Activated CD4-positive, alpha-beta T cell treated with anti-CD3 and anti-CD28 coated beads for 36 hours (primary cell): ENCODE measurements at regions of chr20 and their contacts with region 1.

Region 1: GRCh38 chr20:63739130-63740069 is at the start of gene SLC2A4RG:
- DNase-seq: peak; percentile 79
- ATAC-seq: peak; percentile 58
- H3K4me3 Mint-ChIP-seq: peak within 1 kb of the TSS; percentile 33
- H3K27ac Mint-ChIP-seq: no peak within 1 kb of the TSS
- H3K4me1 Mint-ChIP-seq: peaks cover 19% of the 10 kb centered on the region
- H3K27me3 Mint-ChIP-seq: no peaks in the 10 kb centered on the region
- total RNA-seq, gene SLC2A4RG: 30.9 to 34.9 TPM

Region 2: DNA sequence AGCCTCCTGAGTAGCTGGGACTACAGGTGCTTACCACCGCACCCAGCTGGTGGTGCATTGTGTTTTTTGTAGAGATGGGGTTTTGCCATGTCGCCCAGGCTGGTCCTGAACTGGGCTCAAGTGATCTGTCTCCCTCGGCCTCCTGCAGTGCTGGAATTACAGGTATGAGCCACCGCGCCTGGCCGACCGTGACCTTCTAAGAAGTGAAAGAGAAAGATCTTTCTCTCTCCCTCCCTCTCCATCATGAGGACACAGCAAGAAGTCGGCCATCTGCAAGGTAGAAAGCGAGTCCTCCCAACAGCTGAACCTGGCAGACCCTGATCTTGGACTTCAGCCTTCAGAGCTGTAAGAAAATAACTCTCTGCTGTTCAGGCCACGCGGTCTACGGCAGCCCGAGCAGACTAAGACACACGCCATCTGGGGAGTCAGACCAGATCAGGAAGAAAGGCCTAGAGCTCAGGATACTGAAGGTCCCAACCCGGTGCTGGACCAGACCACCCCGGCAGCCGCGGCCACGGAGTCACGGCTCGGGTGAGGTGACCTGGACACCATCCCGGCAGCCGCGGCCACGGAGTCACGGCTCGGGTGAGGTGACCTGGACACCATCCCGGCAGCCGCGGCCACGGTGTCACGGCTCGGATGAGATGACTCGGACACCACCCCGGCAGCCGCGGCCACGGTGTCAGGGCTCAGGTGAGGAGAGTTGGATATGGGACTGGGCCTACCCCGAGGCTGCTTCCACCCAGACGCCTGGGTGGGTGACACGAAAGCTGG is 122.1 kb before region 1 on chr20:
- CTCF ChIA-PET with region 1: no interaction called
- POLR2A ChIA-PET with region 1: no interaction called
- intact Hi-C with region 1: no loop called
- DNase-seq: no peak
- ATAC-seq: no peak
- H3K4me3 Mint-ChIP-seq: no peak overlapping the region
- H3K27ac Mint-ChIP-seq: no peak overlapping the region
- H3K4me1 Mint-ChIP-seq: peaks cover 5% of the 10 kb centered on the region
- H3K27me3 Mint-ChIP-seq: no peaks in the 10 kb centered on the region

Region 3: GRCh38 chr20:63641792-63642544 is 97.4 kb before region 1 on chr20:
- CTCF ChIA-PET with region 1: no interaction called
- POLR2A ChIA-PET with region 1: interaction called, 6 read pairs
- intact Hi-C with region 1: loop called in 1 of 2 experiments (anchors 5 kb)
- DNase-seq: peak; percentile 98
- ATAC-seq: peak; percentile 73
- H3K4me3 Mint-ChIP-seq: peak overlapping the region; percentile 65
- H3K27ac Mint-ChIP-seq: no peak overlapping the region
- H3K4me1 Mint-ChIP-seq: peaks cover 31% of the 10 kb centered on the region
- H3K27me3 Mint-ChIP-seq: no peaks in the 10 kb centered on the region

Region 4: DNA sequence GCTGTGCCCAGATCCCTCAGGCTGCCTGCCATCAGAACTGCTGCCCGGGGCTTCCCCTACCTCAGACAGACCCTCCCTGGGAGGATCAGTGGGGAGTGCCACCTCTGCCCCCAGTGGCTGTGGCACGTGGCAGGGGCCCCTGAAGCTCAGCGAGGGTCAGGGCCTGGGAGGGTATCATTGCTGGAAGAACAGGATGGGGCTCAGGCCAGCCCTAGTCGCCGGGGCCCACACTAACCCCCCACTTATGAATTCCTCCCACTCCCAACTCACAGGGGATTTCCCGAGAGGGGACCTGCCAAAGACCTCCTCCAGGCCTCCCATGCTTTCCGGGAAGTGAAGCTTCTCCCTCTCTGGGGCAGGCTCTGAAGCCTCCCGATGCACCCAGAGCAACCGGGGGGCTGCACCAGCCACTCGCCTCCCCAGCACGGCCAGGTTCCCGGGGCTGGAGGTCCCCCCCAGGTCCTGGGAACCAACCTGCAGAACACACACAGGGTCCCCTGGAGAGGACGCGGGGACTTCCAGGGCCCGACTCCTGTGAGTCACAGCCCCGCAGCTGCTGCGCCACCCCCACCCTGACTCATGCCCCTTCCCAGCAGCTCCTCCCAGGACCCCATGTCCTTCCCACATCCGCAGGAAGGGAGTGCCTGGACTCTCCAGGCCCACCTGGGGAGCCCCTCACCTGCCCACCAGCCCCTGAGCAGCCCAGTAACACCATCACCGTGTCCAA is 40.5 kb before region 1 on chr20:
- CTCF ChIA-PET with region 1: interaction called, 5 read pairs
- POLR2A ChIA-PET with region 1: no interaction called
- intact Hi-C with region 1: loop called in 1 of 2 experiments (anchors 5 kb)
- DNase-seq: peak; percentile 85
- ATAC-seq: peak; percentile 78
- H3K4me3 Mint-ChIP-seq: no peak overlapping the region
- H3K27ac Mint-ChIP-seq: peak overlapping the region; percentile 82
- H3K4me1 Mint-ChIP-seq: peaks cover 26% of the 10 kb centered on the region
- H3K27me3 Mint-ChIP-seq: no peaks in the 10 kb centered on the region

Region 5: GRCh38 chr20:63819224-63819921 is 80.0 kb after region 1 on chr20:
- CTCF ChIA-PET with region 1: no interaction called
- POLR2A ChIA-PET with region 1: no interaction called
- intact Hi-C with region 1: no loop called
- DNase-seq: no peak
- ATAC-seq: no peak
- H3K4me3 Mint-ChIP-seq: peak overlapping the region; percentile 15
- H3K27ac Mint-ChIP-seq: no peak overlapping the region
- H3K4me1 Mint-ChIP-seq: no peaks in the 10 kb centered on the region
- H3K27me3 Mint-ChIP-seq: peaks cover 9% of the 10 kb centered on the region

Region 6: GRCh38 chr20:63934271-63935068 is 195.1 kb after region 1 on chr20:
- CTCF ChIA-PET with region 1: no interaction called
- POLR2A ChIA-PET with region 1: no interaction called
- intact Hi-C with region 1: loop called in 1 of 2 experiments (anchors 5 kb)
- DNase-seq: peak; percentile 30
- ATAC-seq: no peak
- H3K4me3 Mint-ChIP-seq: no peak overlapping the region
- H3K27ac Mint-ChIP-seq: no peak overlapping the region
- H3K4me1 Mint-ChIP-seq: no peaks in the 10 kb centered on the region
- H3K27me3 Mint-ChIP-seq: no peaks in the 10 kb centered on the region

Region 7: GRCh38 chr20:64038565-64039292 is 299.3 kb after region 1 on chr20:
- CTCF ChIA-PET with region 1: no interaction called
- POLR2A ChIA-PET with region 1: no interaction called
- intact Hi-C with region 1: loop called in 1 of 2 experiments (anchors 5 kb)
- DNase-seq: peak; percentile 89
- ATAC-seq: peak; percentile 70
- H3K4me3 Mint-ChIP-seq: peak overlapping the region; percentile 61
- H3K27ac Mint-ChIP-seq: no peak overlapping the region
- H3K4me1 Mint-ChIP-seq: peaks cover 48% of the 10 kb centered on the region
- H3K27me3 Mint-ChIP-seq: peaks cover 2% of the 10 kb centered on the region